CD4-positive, alpha-beta memory T cell (primary cell): ENCODE measurements at regions of chr19 and their contacts with region 1.

Region 1: GRCh38 chr19:48812094-48812929 is 1.5 kb upstream of the BCAT2 start:
- DNase-seq: peak; percentile 48 to 55 (median 50)
- H3K4me3 ChIP-seq: no peak overlapping the region
- H3K4me3 Mint-ChIP-seq: peak overlapping the region; percentile 79 to 87 (median 84)
- H3K27ac ChIP-seq: no peak overlapping the region
- H3K27ac Mint-ChIP-seq: peak overlapping the region in 6 of 7 donors; percentile 10 to 91 (median 80)
- H3K4me1 ChIP-seq: peaks cover 13% of the 10 kb centered on the region
- H3K4me1 Mint-ChIP-seq: peaks cover 21 to 51% (median 36%) of the 10 kb centered on the region in 4 donors
- H3K27me3 ChIP-seq: no peaks in the 10 kb centered on the region
- H3K27me3 Mint-ChIP-seq: no peaks in the 10 kb centered on the region

Region 2: GRCh38 chr19:48835734-48836088 is 23.4 kb after region 1 on chr19:
- CTCF ChIA-PET with region 1: interaction called, 4 read pairs
- POLR2A ChIA-PET with region 1: no interaction called
- intact Hi-C with region 1: loop called (anchors 1 kb)
- DNase-seq: peak; percentile 87 to 91 (median 89)
- H3K4me3 ChIP-seq: peak overlapping the region in 1 of 2 donors; percentile 51
- H3K4me3 Mint-ChIP-seq: peak overlapping the region; percentile 77 to 91 (median 84)
- H3K27ac ChIP-seq: no peak overlapping the region
- H3K27ac Mint-ChIP-seq: peak overlapping the region in 6 of 7 donors; percentile 68 to 92 (median 86)
- H3K4me1 ChIP-seq: peaks cover 21% of the 10 kb centered on the region
- H3K4me1 Mint-ChIP-seq: peaks cover 15 to 21% (median 16%) of the 10 kb centered on the region in 4 donors
- H3K27me3 ChIP-seq: no peaks in the 10 kb centered on the region
- H3K27me3 Mint-ChIP-seq: peaks cover 4 to 14% of the 10 kb centered on the region in 2 donors